ENCODE measurements at regions of chr17 and their contacts with region 1.

Region 1: GRCh38 chr17:51461578-51462004 is 201.2 kb downstream of the UTP18 start:
- DNase-seq: peak; percentile 80
- H3K4me3 Mint-ChIP-seq: no peak overlapping the region
- H3K27ac Mint-ChIP-seq: no peak overlapping the region
- H3K4me1 Mint-ChIP-seq: no peaks in the 10 kb centered on the region
- H3K27me3 Mint-ChIP-seq: peaks cover 75% of the 10 kb centered on the region
- CTCF ChIP-seq: peak; percentile 92

Region 2: GRCh38 chr17:51423421-51424154 is 38.0 kb before region 1 on chr17:
- CTCF ChIA-PET with region 1: no interaction called
- intact Hi-C with region 1: no loop called
- DNase-seq: no peak
- H3K4me3 Mint-ChIP-seq: no peak overlapping the region
- H3K27ac Mint-ChIP-seq: no peak overlapping the region
- H3K4me1 Mint-ChIP-seq: peaks cover 9% of the 10 kb centered on the region
- H3K27me3 Mint-ChIP-seq: peaks cover 84% of the 10 kb centered on the region
- CTCF ChIP-seq: no peak

Region 3: DNA sequence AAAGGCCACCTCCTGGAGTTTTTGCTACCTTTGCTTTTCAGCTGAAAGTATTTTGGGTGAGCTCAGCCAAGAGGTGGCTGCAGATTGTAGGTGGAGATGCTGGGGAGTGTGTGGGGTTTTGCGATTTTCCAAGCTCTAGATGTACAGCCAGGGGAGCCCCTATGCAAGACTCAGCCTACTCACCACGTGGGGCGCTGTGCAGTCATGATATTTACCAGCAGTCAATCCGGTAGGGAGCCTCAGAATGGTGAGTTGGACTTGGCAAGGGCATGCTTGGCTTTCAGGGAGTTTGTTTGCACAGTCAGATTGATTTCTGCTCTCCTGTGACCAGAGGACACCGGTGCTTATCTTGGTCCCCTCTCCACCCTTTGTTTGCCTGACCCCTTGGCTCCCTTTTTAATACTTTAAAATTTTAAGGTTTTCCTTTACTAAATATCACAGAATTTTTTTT is 25.9 kb before region 1 on chr17:
- CTCF ChIA-PET with region 1: interaction called, 12 read pairs
- intact Hi-C with region 1: no loop called
- DNase-seq: peak; percentile 87
- H3K4me3 Mint-ChIP-seq: no peak overlapping the region
- H3K27ac Mint-ChIP-seq: peak overlapping the region; percentile 21
- H3K4me1 Mint-ChIP-seq: peaks cover 25% of the 10 kb centered on the region
- H3K27me3 Mint-ChIP-seq: peaks cover 33% of the 10 kb centered on the region
- CTCF ChIP-seq: peak; percentile 58

Region 4: DNA sequence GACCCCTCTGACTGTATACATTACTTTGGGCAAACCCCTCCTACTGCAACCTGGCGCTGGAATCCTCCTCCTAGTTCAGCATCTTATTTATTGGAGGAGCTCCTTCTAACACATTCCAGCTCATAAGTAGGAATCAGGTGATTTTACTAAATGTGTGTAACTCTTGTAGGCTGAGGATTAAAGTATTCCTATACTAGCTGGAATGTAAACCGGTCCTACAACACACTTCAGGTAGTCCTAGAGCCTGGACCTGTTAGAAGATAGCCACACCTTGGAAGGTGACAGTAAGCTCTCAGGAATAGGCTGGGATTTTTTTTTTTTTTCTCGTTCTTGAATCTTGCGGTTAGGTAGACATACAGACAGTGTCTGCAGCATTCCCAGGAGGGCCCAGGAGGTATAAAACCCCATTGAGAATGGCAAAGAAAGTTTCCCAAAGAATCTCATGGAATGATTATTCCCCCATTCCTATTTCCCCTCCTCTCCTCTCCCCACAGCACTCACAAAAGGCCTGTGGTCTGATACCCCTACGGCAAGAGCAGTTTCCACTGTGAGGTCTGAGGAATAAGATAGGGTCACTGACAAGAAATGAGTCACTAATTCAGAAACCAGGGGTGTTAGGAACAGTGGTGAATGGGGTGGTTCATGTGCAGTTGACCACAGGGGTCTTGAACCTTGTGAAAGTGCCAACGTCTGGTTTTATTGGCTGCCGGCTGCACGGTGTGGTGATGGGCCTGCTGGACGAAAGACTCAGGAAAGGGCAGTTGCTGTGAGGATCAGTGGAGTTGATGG is 65.8 kb after region 1 on chr17:
- CTCF ChIA-PET with region 1: no interaction called
- intact Hi-C with region 1: no loop called
- DNase-seq: no peak
- H3K4me3 Mint-ChIP-seq: no peak overlapping the region
- H3K27ac Mint-ChIP-seq: no peak overlapping the region
- H3K4me1 Mint-ChIP-seq: no peaks in the 10 kb centered on the region
- H3K27me3 Mint-ChIP-seq: peaks cover 82% of the 10 kb centered on the region
- CTCF ChIP-seq: no peak